ENCODE measurements at regions of chr1 and their contacts with region 1.

Region 1: DNA sequence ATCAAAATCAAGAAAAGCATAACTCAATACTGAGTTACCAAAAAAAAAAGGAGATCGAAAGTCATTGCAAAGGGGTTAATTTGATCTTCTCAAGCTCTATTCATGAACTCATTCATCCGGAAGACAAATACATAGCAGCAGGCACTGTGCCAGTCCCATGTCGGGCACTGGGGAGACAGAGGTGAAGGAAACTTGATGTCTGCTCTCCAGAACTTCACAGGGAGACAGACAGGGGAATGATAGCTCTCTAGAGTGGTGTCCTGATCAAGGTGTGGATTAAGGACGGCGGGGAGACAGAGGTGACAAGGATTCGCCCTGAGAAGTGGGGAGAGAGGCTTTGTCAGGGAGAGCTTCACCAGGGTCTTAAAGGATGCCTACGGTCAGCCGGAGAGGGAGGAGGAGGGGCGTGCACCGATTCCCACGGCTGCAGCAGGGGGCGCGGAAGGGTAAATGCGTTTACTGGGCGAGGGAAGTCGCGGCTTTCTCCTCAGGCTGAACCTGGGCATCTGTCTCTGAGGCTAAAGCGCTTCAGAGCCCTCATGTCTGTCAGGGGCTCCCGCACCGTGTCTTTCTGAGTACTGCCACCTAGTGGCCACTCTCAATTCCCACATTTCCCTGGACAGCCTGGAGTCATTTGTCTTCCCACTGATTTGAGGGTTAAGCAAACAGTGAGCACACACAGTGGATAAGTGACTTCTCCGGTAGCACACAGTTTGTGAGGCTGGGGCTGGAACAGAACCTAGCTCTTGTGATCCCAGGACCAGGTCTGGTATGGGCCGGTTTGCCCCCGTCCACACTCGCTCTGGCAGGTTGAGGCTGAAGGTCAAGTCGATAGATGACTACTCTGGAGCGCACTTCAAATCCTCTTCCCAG is 152.8 kb downstream of the TENT5C start:
- DNase-seq: peak; percentile 79
- ATAC-seq: peak; percentile 97
- H3K4me3 ChIP-seq: peak overlapping the region in 1 of 3 experiments; percentile 25; a peak in 2 of 6 replicates
- H3K27ac ChIP-seq: no peak overlapping the region
- H3K4me1 ChIP-seq: peaks cover 26% of the 10 kb centered on the region
- H3K27me3 ChIP-seq: peaks cover 5 to 18% of the 10 kb centered on the region in 2 experiments; a peak in 3 of 5 replicates
- CTCF ChIP-seq: peak; percentile 92
- EP300 ChIP-seq: no peak
- POLR2A ChIP-seq: no peak
- RAD21 ChIP-seq: peak; percentile 60

Region 2: DNA sequence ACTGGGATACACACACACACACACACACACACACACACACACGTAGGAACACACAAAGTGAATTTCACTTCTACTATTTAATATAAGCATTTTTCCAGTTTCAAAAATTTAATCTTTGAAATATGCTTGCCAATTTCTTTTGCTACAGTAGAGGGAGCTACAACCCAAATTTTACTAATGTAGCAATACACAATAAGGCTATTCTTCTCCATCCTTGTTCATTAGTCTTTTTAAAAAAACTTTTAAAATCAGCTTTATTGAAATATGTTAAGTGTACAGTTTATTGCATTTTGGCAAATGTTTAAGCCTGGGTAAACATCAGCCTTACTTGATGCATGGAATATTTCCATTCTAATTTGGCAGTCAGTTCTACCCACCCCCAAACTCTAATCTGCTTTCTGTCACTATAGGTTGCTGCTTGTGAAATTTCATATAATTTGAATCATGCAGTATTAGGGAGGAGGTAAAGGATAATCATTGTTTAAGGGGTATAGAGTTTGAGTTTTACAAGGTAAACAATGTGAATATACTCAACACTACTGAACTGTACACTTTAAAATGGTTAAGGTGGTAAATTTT is 245.8 kb before region 1 on chr1:
- CTCF ChIA-PET with region 1: interaction called, 15 read pairs
- POLR2A ChIA-PET with region 1: no interaction called
- in situ Hi-C with region 1: no loop called
- intact Hi-C with region 1: loop called (anchors 1 kb)
- DNase-seq: no peak
- ATAC-seq: no peak
- H3K4me3 ChIP-seq: no peak overlapping the region
- H3K27ac ChIP-seq: no peak overlapping the region
- H3K4me1 ChIP-seq: no peaks in the 10 kb centered on the region
- H3K27me3 ChIP-seq: no peaks in the 10 kb centered on the region
- CTCF ChIP-seq: peak; percentile 52
- EP300 ChIP-seq: no peak
- POLR2A ChIP-seq: no peak
- RAD21 ChIP-seq: peak; percentile 28; the same call in 1 of the 2 replicates

Region 3: DNA sequence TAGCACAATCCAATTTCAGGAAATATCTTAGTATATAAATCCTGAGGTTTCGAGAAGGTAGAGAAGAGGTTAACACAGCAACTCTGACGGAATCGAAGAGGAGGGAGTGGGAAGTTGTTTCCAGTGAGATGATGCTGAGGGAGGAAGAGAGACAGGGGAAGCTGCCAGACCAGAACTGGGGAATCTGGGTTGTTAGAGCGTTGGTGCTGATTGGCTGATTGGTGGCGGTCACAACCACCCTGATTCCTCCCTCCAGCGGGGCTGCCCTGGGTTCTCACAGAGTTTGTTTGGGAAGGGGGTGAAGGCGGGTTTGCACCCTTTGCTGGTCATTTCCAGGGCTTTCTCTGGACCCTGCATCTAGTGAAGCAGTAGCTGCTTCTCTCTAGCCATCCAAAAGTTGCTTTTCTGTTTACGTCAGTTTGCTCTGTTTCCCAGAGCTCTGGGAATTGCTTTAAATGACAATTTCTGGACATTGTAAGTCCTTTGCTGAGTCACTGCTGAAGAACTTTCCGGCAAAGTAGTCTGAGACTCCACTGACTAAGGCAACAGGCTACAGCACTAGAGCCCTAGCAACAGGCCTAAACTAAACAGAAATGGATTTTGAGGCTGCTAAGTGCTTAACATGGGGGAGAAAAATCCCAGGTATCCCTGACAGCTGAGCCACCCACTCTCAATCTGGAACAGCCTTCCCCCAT is 62.7 kb before region 1 on chr1:
- CTCF ChIA-PET with region 1: no interaction called
- POLR2A ChIA-PET with region 1: no interaction called
- in situ Hi-C with region 1: no loop called
- intact Hi-C with region 1: no loop called
- DNase-seq: no peak
- ATAC-seq: no peak
- H3K4me3 ChIP-seq: no peak overlapping the region
- H3K27ac ChIP-seq: no peak overlapping the region
- H3K4me1 ChIP-seq: no peaks in the 10 kb centered on the region
- H3K27me3 ChIP-seq: peaks cover 0 to 2% of the 10 kb centered on the region in 2 experiments; a peak in 1 of 5 replicates
- CTCF ChIP-seq: no peak
- EP300 ChIP-seq: no peak
- POLR2A ChIP-seq: no peak
- RAD21 ChIP-seq: no peak

Region 4: GRCh38 chr1:117710710-117711109 is 48.0 kb before region 1 on chr1:
- CTCF ChIA-PET with region 1: interaction called, 8 read pairs
- POLR2A ChIA-PET with region 1: no interaction called
- in situ Hi-C with region 1: no loop called
- intact Hi-C with region 1: loop called (anchors 2 kb)
- DNase-seq: no peak
- ATAC-seq: peak; percentile 67
- H3K4me3 ChIP-seq: no peak overlapping the region
- H3K27ac ChIP-seq: no peak overlapping the region
- H3K4me1 ChIP-seq: no peaks in the 10 kb centered on the region
- H3K27me3 ChIP-seq: peaks cover 1 to 5% of the 10 kb centered on the region in 2 experiments; a peak in 1 of 5 replicates
- CTCF ChIP-seq: peak; percentile 65
- EP300 ChIP-seq: no peak
- POLR2A ChIP-seq: no peak
- RAD21 ChIP-seq: no peak

Region 5: GRCh38 chr1:117770981-117771531 is 12.4 kb after region 1 on chr1:
- CTCF ChIA-PET with region 1: no interaction called
- POLR2A ChIA-PET with region 1: no interaction called
- in situ Hi-C with region 1: no loop called
- intact Hi-C with region 1: no loop called
- DNase-seq: no peak
- ATAC-seq: no peak
- H3K4me3 ChIP-seq: no peak overlapping the region
- H3K27ac ChIP-seq: no peak overlapping the region
- H3K4me1 ChIP-seq: no peaks in the 10 kb centered on the region
- H3K27me3 ChIP-seq: no peaks in the 10 kb centered on the region
- CTCF ChIP-seq: no peak
- EP300 ChIP-seq: no peak
- POLR2A ChIP-seq: no peak
- RAD21 ChIP-seq: no peak

Measured in HepG2 (cell line).